SK-N-SH (cell line): ENCODE measurements at regions of chr16 and their contacts with region 1.

Region 1: DNA sequence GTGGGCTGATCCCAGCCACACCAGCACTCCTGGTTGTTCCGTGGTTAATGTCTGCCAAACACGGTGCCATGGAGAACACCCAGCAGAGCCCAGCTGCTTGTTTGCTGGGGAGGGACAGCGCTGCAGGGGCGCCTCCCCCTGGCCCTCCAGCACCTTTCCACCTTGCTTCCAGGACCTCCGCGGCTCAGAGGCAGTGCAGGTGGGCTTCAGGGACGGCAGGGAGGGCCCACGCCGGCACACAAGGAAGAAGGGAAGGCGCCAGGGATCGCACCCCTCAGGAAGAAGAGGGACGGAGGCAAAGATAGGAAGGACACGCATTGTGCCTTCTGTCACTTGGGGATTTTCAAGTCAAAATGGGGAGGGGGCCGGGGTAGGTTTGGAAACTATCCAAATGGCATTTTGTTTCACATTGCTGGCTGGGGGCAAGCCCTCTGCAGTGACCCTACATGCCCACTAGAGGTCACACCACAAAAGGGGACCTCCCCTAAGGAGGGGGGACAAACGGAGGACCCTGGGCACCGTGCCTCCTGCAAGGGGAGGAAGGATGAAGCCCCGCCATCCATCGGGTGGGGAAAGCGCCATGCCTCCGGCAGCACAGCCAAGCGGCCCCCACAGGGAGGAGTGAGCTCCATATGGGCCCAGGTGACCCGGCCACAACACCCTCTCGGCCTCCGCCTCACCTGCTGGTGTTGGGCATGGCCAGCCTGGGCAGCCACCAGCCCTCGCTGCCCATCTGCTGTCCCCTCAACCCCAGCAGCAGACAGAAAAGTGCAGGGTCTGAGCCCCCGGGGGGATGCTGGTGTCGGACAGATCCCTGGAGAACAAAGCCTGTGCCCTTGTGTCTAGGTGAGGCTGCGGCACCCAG is 7.5 kb upstream of the C16orf95 start:
- DNase-seq: peak; percentile 96
- H3K4me3 ChIP-seq: peak overlapping the region in 1 of 2 experiments; percentile 8; a peak in 1 of 4 replicates
- H3K27ac ChIP-seq: no peak overlapping the region; a peak in 1 of 4 replicates
- H3K4me1 ChIP-seq: peaks cover 0 to 7% of the 10 kb centered on the region in 2 experiments; a peak in 1 of 4 replicates
- H3K27me3 ChIP-seq: no peaks in the 10 kb centered on the region
- CTCF ChIP-seq: peak; percentile 84
- EP300 ChIP-seq: no peak
- RAD21 ChIP-seq: peak; percentile 77

Region 2: GRCh38 chr16:87337262-87337771 is 12.7 kb after region 1 on chr16:
- CTCF ChIA-PET with region 1: interaction called, 16 read pairs
- POLR2A ChIA-PET with region 1: no interaction called
- DNase-seq: peak; percentile 82
- H3K4me3 ChIP-seq: no peak overlapping the region
- H3K27ac ChIP-seq: 0 out of 4 replicates have a peak overlapping the region, but pooled peaks of 1 of the 2 experiments have one; percentile 18
- H3K4me1 ChIP-seq: peaks cover 0 to 8% of the 10 kb centered on the region in 2 experiments; a peak in 2 of 4 replicates
- H3K27me3 ChIP-seq: no peaks in the 10 kb centered on the region
- CTCF ChIP-seq: no peak
- EP300 ChIP-seq: no peak
- RAD21 ChIP-seq: no peak

Region 3: GRCh38 chr16:87435372-87436224 is 111.0 kb after region 1 on chr16:
- CTCF ChIA-PET with region 1: no interaction called
- POLR2A ChIA-PET with region 1: no interaction called
- DNase-seq: peak; percentile 41
- H3K4me3 ChIP-seq: peak overlapping the region; percentile 25 to 63; a peak in 3 of 4 replicates
- H3K27ac ChIP-seq: peak overlapping the region; percentile 71 to 93
- H3K4me1 ChIP-seq: peaks cover 18 to 37% of the 10 kb centered on the region in 2 experiments
- H3K27me3 ChIP-seq: no peaks in the 10 kb centered on the region
- CTCF ChIP-seq: no peak
- EP300 ChIP-seq: no peak; a peak in 1 of 4 replicates
- RAD21 ChIP-seq: no peak

Region 4: GRCh38 chr16:87507351-87508069 is 182.9 kb after region 1 on chr16:
- CTCF ChIA-PET with region 1: no interaction called
- POLR2A ChIA-PET with region 1: no interaction called
- DNase-seq: no peak
- H3K4me3 ChIP-seq: no peak overlapping the region
- H3K27ac ChIP-seq: no peak overlapping the region
- H3K4me1 ChIP-seq: no peaks in the 10 kb centered on the region
- H3K27me3 ChIP-seq: no peaks in the 10 kb centered on the region
- CTCF ChIP-seq: no peak
- EP300 ChIP-seq: no peak
- RAD21 ChIP-seq: no peak